ENCODE measurements at regions of chr9 and their contacts with region 1.

Region 1: DNA sequence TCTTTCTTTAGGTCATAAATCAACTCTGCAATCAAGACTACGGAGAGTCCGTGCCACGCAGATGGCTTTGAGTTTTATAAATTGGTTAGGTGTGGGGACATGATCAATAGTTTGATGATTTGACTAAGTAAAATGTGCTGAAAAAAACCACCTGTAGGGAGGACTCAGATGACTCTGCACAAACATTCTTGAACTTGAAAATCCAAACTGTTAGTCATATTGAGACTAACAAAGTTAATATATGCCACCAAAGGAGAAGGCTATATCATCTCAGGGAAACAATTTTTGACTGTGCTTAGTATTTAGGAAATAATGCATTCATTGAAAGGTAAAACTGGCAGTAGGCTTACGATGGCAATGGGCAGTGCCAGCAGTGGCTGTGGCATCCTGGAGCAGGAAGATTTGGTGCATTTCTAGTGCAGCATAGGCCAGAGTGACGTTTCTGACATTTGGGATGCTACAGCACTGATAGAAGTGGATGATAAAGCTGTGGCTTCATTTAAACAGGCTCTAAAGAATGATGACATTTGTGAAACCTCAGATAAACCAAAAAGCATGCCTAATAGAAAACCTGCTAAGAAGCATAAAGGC is 291.1 kb downstream of the MLLT3 start:
- DNase-seq: no peak
- H3K4me3 ChIP-seq: no peak overlapping the region
- H3K27ac ChIP-seq: no peak overlapping the region
- H3K4me1 ChIP-seq: no peaks in the 10 kb centered on the region
- H3K27me3 ChIP-seq: peaks cover 0 to 3% of the 10 kb centered on the region in 2 donors
- CTCF ChIP-seq: no peak
- POLR2A ChIP-seq: no peak

Region 2: GRCh38 chr9:19934301-19934868 is 396.8 kb before region 1 on chr9:
- intact Hi-C with region 1: loop called (anchors 10 kb)
- DNase-seq: no peak
- H3K4me3 ChIP-seq: peak overlapping the region; percentile 28 to 33
- H3K27ac ChIP-seq: no peak overlapping the region
- H3K4me1 ChIP-seq: no peaks in the 10 kb centered on the region
- H3K27me3 ChIP-seq: no peaks in the 10 kb centered on the region
- CTCF ChIP-seq: no peak
- POLR2A ChIP-seq: no peak

Region 3: DNA sequence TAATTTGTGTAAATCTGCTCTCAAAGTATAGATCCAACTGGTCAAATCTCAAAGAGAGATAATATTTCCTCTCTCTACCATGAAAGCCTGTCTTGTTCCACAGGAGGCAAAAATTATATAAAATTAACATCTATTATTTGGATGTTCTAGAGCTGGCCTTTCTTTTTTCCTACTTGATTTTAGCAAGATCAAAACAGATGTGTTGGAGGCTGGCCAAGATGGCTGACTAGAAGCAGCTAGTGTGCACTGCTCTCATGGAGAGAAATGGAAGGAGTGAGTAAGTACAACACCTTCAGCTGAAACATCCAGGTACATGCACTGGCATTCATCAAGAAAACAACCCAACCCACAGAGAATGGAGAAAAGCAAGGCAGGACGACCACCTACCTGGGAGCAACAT is 243.7 kb before region 1 on chr9:
- intact Hi-C with region 1: no loop called
- DNase-seq: no peak
- H3K4me3 ChIP-seq: no peak overlapping the region
- H3K27ac ChIP-seq: no peak overlapping the region
- H3K4me1 ChIP-seq: no peaks in the 10 kb centered on the region
- H3K27me3 ChIP-seq: no peaks in the 10 kb centered on the region
- CTCF ChIP-seq: no peak
- POLR2A ChIP-seq: no peak

Region 4: DNA sequence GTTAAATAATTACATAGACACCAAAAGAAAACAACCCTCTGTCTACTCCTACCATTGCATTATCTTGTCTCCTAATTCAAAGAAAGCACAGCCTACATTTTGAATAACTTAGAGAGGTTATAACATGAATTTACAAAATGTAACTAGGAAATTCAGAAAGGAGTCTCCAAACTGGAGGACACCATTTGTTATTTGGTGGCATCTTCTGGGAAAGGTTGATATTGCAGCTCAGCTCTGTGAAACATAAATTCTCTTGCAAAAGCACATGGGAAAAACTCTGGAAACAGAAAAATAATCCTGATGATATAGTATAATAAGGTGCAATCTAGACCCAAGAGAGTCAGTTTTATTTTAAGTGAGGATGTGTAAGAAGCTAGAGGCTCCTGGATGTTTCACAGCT is 75.8 kb after region 1 on chr9:
- intact Hi-C with region 1: no loop called
- DNase-seq: no peak
- H3K4me3 ChIP-seq: no peak overlapping the region
- H3K27ac ChIP-seq: no peak overlapping the region
- H3K4me1 ChIP-seq: no peaks in the 10 kb centered on the region
- H3K27me3 ChIP-seq: no peaks in the 10 kb centered on the region
- CTCF ChIP-seq: no peak
- POLR2A ChIP-seq: no peak

Measured in uterus (tissue), 4 donors.